ENCODE measurements at regions of chr12 and their contacts with region 1.

Region 1: DNA sequence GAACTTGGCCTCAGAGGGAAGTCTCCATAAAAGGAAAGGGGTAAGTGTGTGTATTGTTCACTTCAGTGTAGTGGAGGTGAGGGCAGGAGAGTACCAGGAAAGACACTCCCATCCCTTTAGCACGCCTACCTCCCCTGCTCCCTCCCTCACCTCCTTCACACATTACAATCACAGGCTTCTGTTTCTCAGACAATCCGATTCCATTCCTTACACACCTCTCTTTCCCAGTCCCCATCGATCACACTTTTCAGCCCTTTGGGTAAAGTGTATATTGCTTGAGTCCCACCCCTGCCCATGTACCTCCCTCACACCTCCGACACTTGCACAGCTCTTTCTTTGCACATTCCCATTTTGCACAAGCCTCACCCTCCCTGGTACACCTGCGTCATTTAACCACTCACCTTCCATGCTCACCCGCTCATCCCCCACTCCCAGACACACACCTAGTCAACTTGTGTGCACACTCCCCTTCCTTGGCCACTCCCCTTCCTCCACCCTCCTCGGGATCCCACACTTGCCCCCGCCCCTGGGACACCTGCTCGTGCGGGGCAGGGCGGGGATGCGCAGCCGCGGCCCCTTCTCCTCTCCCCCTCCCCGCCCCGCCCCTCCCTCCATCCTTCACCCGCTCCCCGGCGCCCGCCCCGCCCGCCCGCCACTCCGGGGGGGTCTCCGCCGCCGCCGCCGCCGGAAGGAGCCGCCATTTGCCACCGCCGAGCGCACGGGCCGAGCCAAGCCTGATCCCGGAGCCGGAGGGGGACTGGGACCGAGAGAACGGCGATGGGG is at the start of gene MARCHF9:
- DNase-seq: peak; percentile 86
- CTCF ChIP-seq: no peak

Region 2: GRCh38 chr12:57452937-57453509 is 301.6 kb before region 1 on chr12:
- CTCF ChIA-PET with region 1: no interaction called
- POLR2A ChIA-PET with region 1: no interaction called
- DNase-seq: peak; percentile 66
- CTCF ChIP-seq: peak; percentile 94

Region 3: GRCh38 chr12:57765042-57765697 is 10.6 kb after region 1 on chr12:
- CTCF ChIA-PET with region 1: interaction called, 61 read pairs
- POLR2A ChIA-PET with region 1: no interaction called
- DNase-seq: peak; percentile 60
- CTCF ChIP-seq: peak; percentile 68

Region 4: GRCh38 chr12:57771708-57772428 is 17.3 kb after region 1 on chr12 and contains the start of gene METTL1:
- CTCF ChIA-PET with region 1: interaction called, 61 read pairs
- POLR2A ChIA-PET with region 1: no interaction called
- DNase-seq: peak; percentile 96
- CTCF ChIP-seq: no peak